ENCODE measurements at regions of chr11 and their contacts with region 1.

Region 1: DNA sequence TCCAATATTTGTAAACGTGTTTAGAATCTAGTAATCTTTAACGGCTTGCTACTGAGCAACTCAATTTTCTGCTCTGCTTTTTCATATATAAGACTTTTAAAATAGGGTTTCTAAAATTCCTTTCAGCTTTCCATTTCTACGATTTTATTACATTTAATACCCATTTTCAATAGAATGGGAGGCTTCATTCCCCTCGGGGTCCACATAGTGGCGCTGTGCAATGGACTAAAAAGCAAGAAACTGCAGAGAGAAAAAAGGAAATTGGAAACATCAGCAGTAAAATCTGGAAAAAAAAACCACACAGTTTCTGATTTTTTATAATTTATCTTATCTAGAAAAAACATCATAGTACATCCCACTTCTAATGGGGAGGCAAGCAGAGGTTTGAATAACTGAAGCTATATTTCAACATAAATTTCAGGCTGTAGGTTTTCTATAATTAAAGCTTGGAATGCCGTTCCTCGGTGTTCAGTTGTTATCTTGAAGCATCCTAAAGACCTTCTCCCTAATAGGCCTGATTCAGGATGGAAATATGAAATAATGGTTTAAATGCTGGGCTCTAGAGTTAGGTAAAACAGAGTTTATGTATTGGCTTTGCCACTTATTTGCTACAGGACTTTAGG is 18.7 kb upstream of the JHY start:
- DNase-seq: peak; percentile 71
- ATAC-seq: no peak
- H3K4me3 Mint-ChIP-seq: no peak overlapping the region
- H3K27ac Mint-ChIP-seq: no peak overlapping the region
- H3K4me1 Mint-ChIP-seq: no peaks in the 10 kb centered on the region
- H3K27me3 Mint-ChIP-seq: peaks cover 5% of the 10 kb centered on the region

Region 2: DNA sequence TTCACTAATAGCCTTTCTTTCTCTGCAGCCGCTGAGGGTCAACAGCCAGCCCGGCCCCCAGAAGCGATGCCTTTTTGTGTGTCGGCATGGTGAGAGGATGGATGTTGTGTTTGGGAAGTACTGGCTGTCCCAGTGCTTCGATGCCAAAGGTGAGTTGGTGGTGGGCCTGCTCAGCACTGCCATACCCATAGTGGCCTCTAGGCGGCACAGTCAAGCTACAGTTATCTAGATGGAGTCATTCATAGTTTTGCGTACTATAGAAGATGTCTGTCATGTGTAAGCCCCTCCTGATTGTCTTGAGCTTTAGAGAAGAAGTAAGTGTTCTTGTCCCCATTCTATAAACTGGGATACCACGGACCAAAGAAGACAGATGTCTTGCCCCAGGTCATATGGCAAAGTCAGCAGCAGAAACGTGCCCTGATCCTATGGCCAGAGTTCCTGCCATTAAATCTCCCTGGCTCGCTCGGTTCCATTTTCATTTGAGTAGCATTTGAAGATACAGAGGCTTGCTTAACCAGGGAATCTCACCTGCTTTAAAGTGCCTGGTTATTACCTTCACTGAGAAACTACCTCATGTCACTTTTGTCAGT is 67.6 kb before region 1 on chr11:
- CTCF ChIA-PET with region 1: interaction called, 119 read pairs
- POLR2A ChIA-PET with region 1: no interaction called
- intact Hi-C with region 1: no loop called
- DNase-seq: peak; percentile 84
- ATAC-seq: peak; percentile 91
- H3K4me3 Mint-ChIP-seq: no peak overlapping the region
- H3K27ac Mint-ChIP-seq: no peak overlapping the region
- H3K4me1 Mint-ChIP-seq: peaks cover 2% of the 10 kb centered on the region
- H3K27me3 Mint-ChIP-seq: no peaks in the 10 kb centered on the region

Region 3: GRCh38 chr11:122874991-122875390 is 11.2 kb after region 1 on chr11:
- CTCF ChIA-PET with region 1: interaction called, 25 read pairs
- POLR2A ChIA-PET with region 1: no interaction called
- intact Hi-C with region 1: no loop called
- DNase-seq: no peak
- ATAC-seq: no peak
- H3K4me3 Mint-ChIP-seq: no peak overlapping the region
- H3K27ac Mint-ChIP-seq: no peak overlapping the region
- H3K4me1 Mint-ChIP-seq: peaks cover 14% of the 10 kb centered on the region
- H3K27me3 Mint-ChIP-seq: no peaks in the 10 kb centered on the region

Region 4: DNA sequence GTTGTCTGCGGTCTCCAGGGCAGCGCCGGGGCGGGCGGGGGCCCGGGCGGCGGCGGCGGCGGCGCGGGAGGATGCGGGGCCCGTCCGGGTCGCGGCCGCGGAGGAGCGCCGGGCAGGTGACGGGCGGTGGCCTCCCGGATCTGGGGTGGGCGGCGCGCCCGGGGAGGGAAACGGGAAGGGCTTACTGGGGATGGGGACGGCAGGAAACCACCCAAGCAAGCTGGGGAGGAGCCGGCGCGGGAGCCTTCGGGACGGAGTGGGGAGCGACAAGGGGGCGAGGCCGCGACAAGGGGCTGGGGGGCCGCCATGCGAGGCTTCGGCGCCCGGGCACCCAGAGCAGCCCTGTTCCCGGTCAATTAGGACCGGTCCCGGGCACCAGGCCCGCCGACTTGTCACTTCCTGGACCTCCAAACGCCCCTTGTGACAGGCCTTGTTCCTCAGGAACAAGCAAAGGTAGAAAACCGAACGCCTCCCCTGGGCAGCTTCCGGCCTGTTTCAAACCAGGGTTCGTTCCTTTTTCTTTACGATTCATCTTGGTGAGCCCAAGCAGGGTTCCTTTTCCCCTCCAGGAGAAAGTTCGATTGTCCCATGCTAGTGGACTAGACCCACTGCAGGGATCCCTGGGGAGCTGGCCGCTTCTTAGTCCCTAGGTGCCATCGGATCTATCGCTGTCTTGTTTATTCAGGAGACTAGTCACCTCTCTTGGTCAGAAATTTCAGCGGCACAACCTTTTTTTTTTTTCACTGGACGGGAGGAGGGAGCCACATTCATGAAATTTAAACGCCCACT is 19.2 kb after region 1 on chr11:
- CTCF ChIA-PET with region 1: interaction called, 20 read pairs
- POLR2A ChIA-PET with region 1: no interaction called
- intact Hi-C with region 1: no loop called
- DNase-seq: no peak
- ATAC-seq: peak; percentile 74
- H3K4me3 Mint-ChIP-seq: peak overlapping the region; percentile 77
- H3K27ac Mint-ChIP-seq: peak overlapping the region; percentile 63
- H3K4me1 Mint-ChIP-seq: peaks cover 34% of the 10 kb centered on the region
- H3K27me3 Mint-ChIP-seq: peaks cover 6% of the 10 kb centered on the region